Thyroid gland (tissue), 4 donors: ENCODE measurements at regions of chr20 and their contacts with region 1.

Region 1: GRCh38 chr20:36605399-36606157 is at the start of gene RAB5IF:
- DNase-seq: peak; percentile 98 to 99
- H3K4me3 ChIP-seq: peak within 1 kb of the TSS; percentile 85 to 100 (median 98)
- H3K27ac ChIP-seq: peak within 1 kb of the TSS; percentile 67 to 90 (median 78)
- H3K4me1 ChIP-seq: peaks cover 10 to 17% of the 10 kb centered on the region in 2 donors
- H3K27me3 ChIP-seq: no peaks in the 10 kb centered on the region
- CTCF ChIP-seq: peak; percentile 32 to 99 (median 90)
- POLR2A ChIP-seq: peak; percentile 19 to 84
- total RNA-seq, gene RAB5IF: 56.9 to 105 (median 85.1) TPM

Region 2: GRCh38 chr20:36460648-36461599 is 144.7 kb before region 1 on chr20:
- intact Hi-C with region 1: loop called (anchors 10 kb)
- DNase-seq: peak; percentile 94
- H3K4me3 ChIP-seq: peak overlapping the region in 1 of 3 donors; percentile 90
- H3K27ac ChIP-seq: peak overlapping the region; percentile 80 to 97 (median 95)
- H3K4me1 ChIP-seq: peaks cover 33 to 40% of the 10 kb centered on the region in 2 donors
- H3K27me3 ChIP-seq: no peaks in the 10 kb centered on the region
- CTCF ChIP-seq: peak in 1 of 6 experiments; percentile 18
- POLR2A ChIP-seq: peak; percentile 96 to 98

Region 3: DNA sequence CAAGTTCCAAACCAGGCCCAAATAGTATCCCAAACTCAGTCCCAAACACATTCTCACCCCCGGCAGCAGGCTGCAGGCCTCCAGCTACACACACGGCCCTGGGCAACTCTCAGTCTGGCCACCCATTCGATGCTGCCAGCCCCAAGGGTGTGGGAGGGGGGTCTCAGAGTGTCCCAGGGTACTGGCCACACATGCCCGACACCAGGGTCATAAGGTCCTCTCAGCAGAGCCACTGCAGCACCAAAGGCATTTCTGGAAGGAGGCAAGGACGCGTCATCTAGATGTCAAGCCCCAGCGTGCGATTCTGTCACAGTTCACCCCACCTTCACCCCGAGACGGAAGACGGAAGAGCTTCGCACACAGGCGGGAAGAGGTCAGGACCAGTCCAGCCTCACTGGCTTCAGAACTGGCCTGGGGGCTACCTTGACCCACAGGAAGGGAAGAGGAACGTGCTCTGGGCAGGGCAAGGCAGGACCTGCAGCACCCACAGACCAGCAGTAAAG is 54.7 kb before region 1 on chr20:
- intact Hi-C with region 1: loop called (anchors 5 kb)
- DNase-seq: no peak
- H3K4me3 ChIP-seq: no peak overlapping the region
- H3K27ac ChIP-seq: peak overlapping the region in 1 of 3 donors; percentile 17
- H3K4me1 ChIP-seq: peaks cover 0 to 7% of the 10 kb centered on the region in 2 donors
- H3K27me3 ChIP-seq: no peaks in the 10 kb centered on the region
- CTCF ChIP-seq: no peak
- POLR2A ChIP-seq: no peak

Region 4: GRCh38 chr20:36754656-36755222 is 149.2 kb after region 1 on chr20:
- intact Hi-C with region 1: loop called (anchors 10 kb)
- DNase-seq: peak; percentile 31 to 34
- H3K4me3 ChIP-seq: no peak overlapping the region
- H3K27ac ChIP-seq: no peak overlapping the region
- H3K4me1 ChIP-seq: no peaks in the 10 kb centered on the region
- H3K27me3 ChIP-seq: no peaks in the 10 kb centered on the region
- CTCF ChIP-seq: peak; percentile 39 to 80 (median 64)
- POLR2A ChIP-seq: no peak